HEK293T (cell line): ENCODE measurements at regions of chr14 and their contacts with region 1.

Region 1: DNA sequence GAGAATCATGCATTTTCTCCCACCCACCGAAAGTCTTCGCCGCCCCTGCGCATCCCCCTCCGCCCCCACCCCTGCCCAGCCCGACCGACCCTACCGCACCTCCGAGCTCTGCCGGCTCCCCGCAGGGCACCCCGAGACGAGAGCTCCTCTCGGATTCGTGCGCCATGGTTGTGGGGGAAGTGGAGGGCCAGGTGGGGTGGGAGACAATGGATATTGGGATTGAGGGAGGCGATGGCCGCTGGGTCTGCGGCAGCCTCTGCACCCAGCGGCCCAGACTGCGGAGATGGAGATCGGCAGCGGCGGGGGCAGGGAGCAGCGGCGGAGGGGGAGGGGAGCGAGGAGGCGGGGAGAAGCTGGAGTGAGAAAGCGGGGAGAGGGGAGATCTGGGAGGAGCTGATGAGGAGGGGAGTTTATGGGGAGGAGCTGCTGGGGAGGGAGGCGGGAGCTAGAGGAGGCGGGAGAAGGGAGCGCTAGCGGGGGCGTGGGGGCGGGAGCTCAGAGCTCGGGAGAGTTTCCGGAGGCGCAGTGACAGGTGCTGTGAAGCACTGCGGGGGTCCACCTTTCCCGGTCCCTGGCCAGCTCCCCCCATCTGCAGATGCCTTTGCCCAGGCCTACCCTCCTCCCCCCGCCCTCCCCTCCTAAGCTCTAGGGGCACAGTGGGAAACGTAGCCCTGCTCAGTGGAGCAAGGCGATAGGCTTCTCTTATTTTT is at the start of gene SALL2:
- DNase-seq: peak; percentile 78

Region 2: GRCh38 chr14:21244540-21244939 is 281.6 kb before region 1 on chr14:
- CTCF ChIA-PET with region 1: no interaction called
- POLR2A ChIA-PET with region 1: no interaction called
- DNase-seq: no peak

Region 3: DNA sequence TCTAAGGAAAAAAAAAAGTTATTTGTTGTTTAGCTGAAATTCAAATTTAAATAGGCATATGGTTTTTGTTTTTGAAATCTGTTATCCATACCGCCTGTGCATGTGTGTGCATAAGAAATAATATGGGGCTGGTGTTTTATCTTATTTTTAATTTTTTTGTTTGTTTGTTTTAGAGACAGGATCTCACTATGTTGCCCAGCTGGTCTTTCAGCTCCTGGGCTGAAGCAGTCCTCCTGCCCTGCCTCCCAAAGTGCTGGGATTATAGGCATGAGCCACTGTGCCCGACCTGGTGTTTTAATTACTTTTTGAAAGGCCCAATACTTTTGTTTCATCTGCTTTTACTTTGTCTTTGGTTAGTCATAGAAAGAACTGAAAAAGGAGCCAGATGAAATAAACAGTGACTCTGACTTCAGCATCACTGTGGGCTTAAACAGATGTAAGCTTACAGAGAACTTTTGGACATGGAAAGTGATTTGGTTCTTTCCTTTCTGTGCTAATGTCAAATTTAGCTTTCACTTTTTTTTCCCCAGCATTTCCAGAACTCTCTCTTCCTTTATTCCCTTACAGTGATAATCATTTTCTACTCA is 179.5 kb before region 1 on chr14:
- CTCF ChIA-PET with region 1: no interaction called
- POLR2A ChIA-PET with region 1: no interaction called
- DNase-seq: no peak

Region 4: DNA sequence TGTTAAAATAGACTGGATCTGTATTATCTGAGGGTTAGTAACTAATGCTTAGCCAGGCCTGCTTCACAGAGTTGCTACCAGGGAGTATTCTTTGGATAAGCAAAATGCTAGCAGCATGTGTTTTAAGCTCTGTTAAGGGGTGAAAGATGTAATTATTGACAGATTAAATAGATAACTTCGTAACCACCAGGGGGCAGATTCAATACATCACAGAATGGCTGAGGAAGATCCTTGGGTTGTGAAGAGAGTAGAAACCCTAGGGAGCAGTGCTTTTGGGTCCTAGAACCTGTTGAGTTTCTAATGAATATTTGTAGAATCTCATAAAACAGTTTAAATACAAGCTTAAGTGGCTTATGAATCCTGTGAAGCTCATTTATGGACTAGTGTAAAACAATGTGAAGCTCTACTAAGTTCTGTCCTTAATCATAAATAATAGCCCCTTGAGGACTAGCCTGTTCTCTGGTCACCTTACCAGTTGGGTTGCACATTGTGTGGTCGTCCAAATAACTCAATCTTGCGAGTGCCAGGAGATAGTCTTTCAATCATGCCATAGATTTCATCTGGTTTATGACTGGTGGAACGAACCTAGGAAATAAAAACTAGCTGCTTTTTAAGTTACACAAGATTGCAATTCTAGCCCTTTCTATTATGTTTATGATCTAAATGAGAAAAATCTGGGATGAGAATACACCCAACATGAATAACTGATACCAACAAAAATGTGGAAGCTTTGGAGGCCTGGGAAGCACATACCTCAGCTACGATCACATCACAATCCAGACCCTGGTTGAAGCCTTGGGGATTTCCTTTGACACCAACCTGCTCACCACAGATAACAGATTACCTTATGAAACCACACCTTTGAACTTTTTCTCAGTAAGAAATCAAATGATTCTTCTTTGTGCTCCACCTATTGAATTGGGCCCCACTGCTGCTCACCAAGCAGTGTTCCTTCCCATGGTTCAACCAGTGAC is 27.3 kb before region 1 on chr14:
- CTCF ChIA-PET with region 1: interaction called, 6 read pairs
- POLR2A ChIA-PET with region 1: interaction called, 26 read pairs
- DNase-seq: peak; percentile 36

Region 5: GRCh38 chr14:21536418-21537089 is 10.4 kb after region 1 on chr14:
- CTCF ChIA-PET with region 1: interaction called, 3 read pairs
- POLR2A ChIA-PET with region 1: interaction called, 19 read pairs
- DNase-seq: no peak

Region 6: DNA sequence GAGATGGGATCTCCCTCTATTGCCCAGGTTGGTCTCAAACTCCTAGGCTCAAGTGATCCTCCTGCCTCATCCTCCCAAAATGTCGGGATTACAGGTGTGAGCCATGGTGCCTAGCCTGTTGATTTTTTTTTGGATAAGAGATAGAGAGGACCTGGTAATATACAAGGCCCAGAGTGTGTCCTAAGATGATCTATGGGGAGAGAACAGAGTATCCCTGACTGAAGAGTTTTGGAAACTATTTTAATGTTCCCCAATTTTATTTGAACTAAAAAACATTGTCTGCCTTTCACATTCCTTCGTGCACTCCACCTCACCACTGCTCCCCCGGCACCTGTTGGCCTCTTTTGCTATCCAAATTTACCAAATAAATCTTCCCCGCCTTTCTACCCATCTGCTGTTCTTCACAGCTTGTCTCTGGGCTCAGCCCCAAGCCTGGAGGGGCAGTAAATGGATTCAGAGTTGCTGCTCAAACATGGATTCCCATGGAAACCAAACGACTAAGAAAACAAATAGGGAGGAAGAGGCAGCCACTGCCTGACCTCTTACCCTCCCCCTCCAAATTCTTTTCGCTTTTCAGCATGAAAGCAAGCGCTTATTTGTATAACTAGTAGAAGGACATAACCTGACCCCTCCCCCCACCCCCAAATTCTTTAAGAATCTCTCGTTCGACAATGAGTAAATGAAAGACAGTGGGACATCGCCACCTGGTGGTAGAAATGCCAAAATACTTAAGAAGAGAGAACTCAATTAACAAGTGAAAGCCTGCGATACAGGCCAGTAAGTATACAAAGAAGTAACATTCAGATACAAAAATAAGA is 31.2 kb after region 1 on chr14:
- CTCF ChIA-PET with region 1: interaction called, 3 read pairs
- POLR2A ChIA-PET with region 1: interaction called, 15 read pairs
- DNase-seq: peak; percentile 54

Region 7: DNA sequence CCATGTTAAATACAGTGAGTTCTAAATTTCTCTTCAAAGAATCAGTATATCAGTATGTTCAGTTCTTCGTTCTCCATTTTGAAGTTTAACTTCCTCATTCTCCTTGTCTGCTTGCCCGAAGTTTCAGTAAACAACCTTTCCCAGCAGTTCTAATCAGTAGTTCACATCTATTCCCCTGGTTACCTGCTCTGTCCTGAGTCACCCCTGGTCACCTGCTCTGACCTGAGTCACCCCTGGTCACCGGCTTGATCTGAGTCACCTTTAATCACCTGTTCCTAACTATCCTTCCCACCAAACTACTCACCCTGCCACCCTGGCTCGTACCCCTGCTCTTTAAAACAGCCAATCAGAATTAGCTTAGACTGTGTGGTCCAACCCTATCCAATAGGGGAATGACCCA is 63.2 kb after region 1 on chr14:
- CTCF ChIA-PET with region 1: no interaction called
- POLR2A ChIA-PET with region 1: no interaction called
- DNase-seq: no peak

Region 8: GRCh38 chr14:21711360-21711961 is 185.3 kb after region 1 on chr14:
- CTCF ChIA-PET with region 1: no interaction called
- POLR2A ChIA-PET with region 1: no interaction called
- DNase-seq: peak; percentile 33